Dorsolateral prefrontal cortex (tissue), 120 donors: ENCODE measurements at regions of chr6 and their contacts with region 1.

Region 1: GRCh38 chr6:4775584-4776494 is at the start of gene CDYL:
- DNase-seq: peak; percentile 38 to 89 (median 68)
- H3K4me3 ChIP-seq: peak within 1 kb of the TSS; percentile 37 to 82 (median 70)
- H3K27ac ChIP-seq: peak within 1 kb of the TSS in 45 of 59 donors; percentile 11 to 86 (median 67)
- H3K27me3 ChIP-seq: no peaks in the 10 kb centered on the region
- CTCF ChIP-seq: peak in 5 of 56 donors; percentile 11 to 28 (median 16)
- total RNA-seq, gene CDYL: 59.7 to 141 (median 86.0) TPM

Region 2: GRCh38 chr6:4394786-4395185 is 381.1 kb before region 1 on chr6:
- intact Hi-C with region 1: loop called in 1 of 2 experiments (anchors 5 kb)
- DNase-seq: no peak
- H3K4me3 ChIP-seq: no peak overlapping the region
- H3K27ac ChIP-seq: no peak overlapping the region
- H3K27me3 ChIP-seq: no peaks in the 10 kb centered on the region
- CTCF ChIP-seq: no peak

Region 3: DNA sequence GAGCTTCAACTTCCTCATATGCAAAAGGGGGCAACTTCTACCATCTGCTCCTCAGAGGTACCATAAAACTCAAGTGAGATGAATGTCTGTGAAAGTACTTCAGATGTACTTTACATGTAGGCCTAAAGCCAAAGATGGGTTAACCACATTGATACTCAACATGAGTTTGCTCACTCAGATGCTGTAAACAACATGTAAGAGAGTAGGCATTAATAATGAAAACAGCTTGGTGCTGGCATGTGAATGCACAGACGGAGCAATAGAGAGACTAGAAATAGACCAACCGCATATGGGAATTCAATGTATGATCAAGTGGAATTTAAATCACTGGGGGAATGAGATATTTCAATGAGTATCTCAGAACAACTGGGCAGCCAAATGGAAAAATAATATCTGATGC is 143.4 kb before region 1 on chr6:
- intact Hi-C with region 1: no loop called
- DNase-seq: no peak
- H3K4me3 ChIP-seq: no peak overlapping the region
- H3K27ac ChIP-seq: no peak overlapping the region
- H3K27me3 ChIP-seq: no peaks in the 10 kb centered on the region
- CTCF ChIP-seq: no peak

Region 4: GRCh38 chr6:4647414-4648365 is 128.1 kb before region 1 on chr6:
- intact Hi-C with region 1: loop called in 1 of 2 experiments (anchors 5 kb)
- DNase-seq: peak; percentile 16 to 84 (median 71)
- H3K4me3 ChIP-seq: peak overlapping the region in 58 of 59 donors; percentile 21 to 75 (median 55)
- H3K27ac ChIP-seq: peak overlapping the region in 31 of 59 donors; percentile 4 to 81 (median 53)
- H3K27me3 ChIP-seq: no peaks in the 10 kb centered on the region
- CTCF ChIP-seq: peak in 18 of 56 donors; percentile 5 to 45 (median 18)

Region 5: GRCh38 chr6:4687989-4688947 is 87.6 kb before region 1 on chr6:
- intact Hi-C with region 1: no loop called
- DNase-seq: no peak
- H3K4me3 ChIP-seq: no peak overlapping the region
- H3K27ac ChIP-seq: no peak overlapping the region
- H3K27me3 ChIP-seq: no peaks in the 10 kb centered on the region
- CTCF ChIP-seq: no peak

Region 6: DNA sequence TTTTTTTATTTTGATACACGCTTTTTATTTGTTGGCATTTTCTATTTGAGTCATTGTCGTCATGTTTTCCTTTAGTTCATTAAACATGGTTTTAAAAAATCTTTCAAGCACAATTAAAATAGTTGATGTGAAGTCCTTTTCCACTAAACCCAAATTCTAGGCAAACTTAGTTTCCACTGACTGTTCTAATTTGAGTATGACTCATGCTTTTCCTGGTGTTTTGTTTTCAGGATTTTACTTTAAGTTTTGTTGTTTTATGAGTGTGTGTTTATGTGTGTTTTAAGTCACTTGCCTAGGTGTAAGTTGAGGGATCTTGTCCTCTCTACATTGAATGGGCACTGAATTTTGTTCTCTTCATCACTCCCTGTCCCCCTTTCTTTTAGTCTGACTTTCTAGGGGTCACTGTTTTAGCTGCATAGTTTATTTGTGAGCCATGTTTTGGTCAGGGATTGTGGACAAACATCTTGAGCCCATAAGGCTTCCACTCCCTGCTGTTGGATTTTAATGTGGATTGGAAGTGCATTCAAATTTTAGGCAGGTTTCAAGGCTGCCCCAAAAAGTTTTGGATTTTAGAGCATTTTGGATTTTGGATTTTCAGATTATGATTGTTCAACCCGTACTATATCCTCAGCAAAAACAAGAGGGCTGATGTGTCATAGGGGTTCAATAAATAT is 95.1 kb after region 1 on chr6:
- intact Hi-C with region 1: no loop called
- DNase-seq: no peak
- H3K4me3 ChIP-seq: no peak overlapping the region
- H3K27ac ChIP-seq: no peak overlapping the region
- H3K27me3 ChIP-seq: no peaks in the 10 kb centered on the region
- CTCF ChIP-seq: no peak

Region 7: GRCh38 chr6:5003604-5004372 is 227.9 kb after region 1 on chr6 and contains the start of gene RPP40:
- intact Hi-C with region 1: loop called in 1 of 2 experiments (anchors 10 kb)
- DNase-seq: peak; percentile 96 to 98 (median 98)
- H3K4me3 ChIP-seq: peak within 1 kb of the TSS; percentile 65 to 92 (median 78)
- H3K27ac ChIP-seq: peak within 1 kb of the TSS in 58 of 59 donors; percentile 51 to 96 (median 87)
- H3K27me3 ChIP-seq: no peaks in the 10 kb centered on the region
- CTCF ChIP-seq: peak; percentile 59 to 93 (median 82)
- total RNA-seq, gene RPP40: 2.3 to 12.3 (median 7.3) TPM

Region 8: GRCh38 chr6:5553767-5554166 is 777.9 kb after region 1 on chr6:
- intact Hi-C with region 1: no loop called
- DNase-seq: no peak
- H3K4me3 ChIP-seq: no peak overlapping the region
- H3K27ac ChIP-seq: no peak overlapping the region
- H3K27me3 ChIP-seq: no peaks in the 10 kb centered on the region
- CTCF ChIP-seq: no peak